ENCODE measurements at regions of chr12 and their contacts with region 1.

Region 1: DNA sequence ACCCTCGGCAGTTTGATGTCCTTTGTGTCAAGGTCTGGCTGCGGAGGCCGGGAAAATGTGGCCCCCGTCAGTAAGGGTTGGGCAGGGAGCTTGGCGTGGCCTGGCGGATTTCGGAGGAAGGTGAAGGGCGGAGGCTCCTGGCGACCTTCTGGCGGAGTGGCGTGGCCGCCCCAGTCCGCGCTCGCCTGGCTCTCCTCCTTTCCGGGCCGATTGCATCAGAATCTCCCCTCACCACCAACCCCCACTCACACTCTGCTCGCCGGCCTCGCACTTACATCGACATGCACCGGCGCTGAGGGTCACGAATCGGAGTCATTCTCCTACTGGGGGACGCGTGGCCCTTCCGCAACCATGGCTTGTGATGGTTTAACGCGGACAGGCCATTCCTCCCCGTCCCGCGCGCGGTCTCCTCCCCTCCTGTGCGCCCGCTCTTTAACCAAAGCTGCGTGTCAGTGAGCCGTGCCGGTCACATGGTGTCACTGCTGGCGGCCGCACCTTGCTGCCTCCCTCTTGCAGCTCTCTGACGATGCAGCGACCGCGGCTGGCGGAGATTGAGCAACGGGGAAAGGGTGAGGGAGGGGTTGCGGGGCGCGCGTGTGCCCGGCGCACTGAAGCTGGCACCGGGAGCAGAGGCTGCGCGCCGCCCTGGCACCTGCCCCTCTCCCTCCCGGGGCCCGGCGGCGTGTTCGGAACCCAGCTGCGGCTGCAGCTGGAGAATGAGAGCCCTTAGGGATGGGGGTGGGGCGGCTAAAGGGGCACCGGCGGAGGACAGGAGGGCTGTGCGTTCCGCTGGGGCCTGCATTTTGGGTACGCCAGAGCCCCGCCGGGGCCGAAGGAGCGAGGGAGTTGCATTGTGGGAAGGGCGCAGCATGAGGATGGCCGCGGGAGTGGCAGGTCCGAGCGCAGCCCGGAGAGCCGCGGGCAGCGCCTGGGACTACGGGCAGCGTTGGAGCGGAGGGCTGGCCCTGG is at the start of gene SLC38A1:
- DNase-seq: peak; percentile 96
- H3K4me3 Mint-ChIP-seq: no peak within 1 kb of the TSS
- H3K27ac Mint-ChIP-seq: no peak within 1 kb of the TSS
- H3K4me1 Mint-ChIP-seq: peaks cover 6% of the 10 kb centered on the region
- H3K27me3 Mint-ChIP-seq: no peaks in the 10 kb centered on the region
- CTCF ChIP-seq: no peak
- total RNA-seq, gene SLC38A1: 327 and 339 TPM in 2 replicates

Region 2: DNA sequence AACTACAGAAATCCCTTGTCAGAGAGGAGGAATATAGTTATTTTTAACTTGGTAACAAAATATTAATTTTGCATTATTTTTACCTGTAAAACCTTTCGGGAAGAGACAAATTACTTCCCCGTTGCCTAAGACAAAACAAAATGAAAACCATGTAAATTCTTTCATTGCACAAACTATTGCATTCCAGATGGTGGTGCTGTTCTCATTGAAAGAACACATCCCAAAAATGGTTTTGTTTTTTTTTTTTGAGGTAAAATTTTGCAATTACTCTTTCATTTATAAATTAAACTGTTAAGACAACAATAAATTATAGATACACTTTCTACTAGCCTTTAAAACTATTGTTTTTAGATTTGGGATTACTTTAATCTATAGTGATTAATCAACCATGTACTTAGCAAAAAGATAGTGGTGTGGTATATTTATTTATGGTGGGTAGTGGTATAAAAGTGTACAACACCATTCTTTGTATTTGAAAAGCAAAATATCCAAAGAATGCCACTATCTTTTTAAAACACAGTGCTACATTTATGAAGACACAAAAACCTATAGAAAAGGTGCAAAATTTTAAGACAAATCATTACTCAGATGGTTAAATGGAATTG is 115.5 kb before region 1 on chr12:
- CTCF ChIA-PET with region 1: interaction called, 7 read pairs
- POLR2A ChIA-PET with region 1: interaction called, 73 read pairs
- intact Hi-C with region 1: loop called (anchors 2 kb)
- DNase-seq: peak; percentile 46
- H3K4me3 Mint-ChIP-seq: no peak overlapping the region
- H3K27ac Mint-ChIP-seq: no peak overlapping the region
- H3K4me1 Mint-ChIP-seq: peaks cover 5% of the 10 kb centered on the region
- H3K27me3 Mint-ChIP-seq: no peaks in the 10 kb centered on the region
- CTCF ChIP-seq: peak; percentile 77

Region 3: DNA sequence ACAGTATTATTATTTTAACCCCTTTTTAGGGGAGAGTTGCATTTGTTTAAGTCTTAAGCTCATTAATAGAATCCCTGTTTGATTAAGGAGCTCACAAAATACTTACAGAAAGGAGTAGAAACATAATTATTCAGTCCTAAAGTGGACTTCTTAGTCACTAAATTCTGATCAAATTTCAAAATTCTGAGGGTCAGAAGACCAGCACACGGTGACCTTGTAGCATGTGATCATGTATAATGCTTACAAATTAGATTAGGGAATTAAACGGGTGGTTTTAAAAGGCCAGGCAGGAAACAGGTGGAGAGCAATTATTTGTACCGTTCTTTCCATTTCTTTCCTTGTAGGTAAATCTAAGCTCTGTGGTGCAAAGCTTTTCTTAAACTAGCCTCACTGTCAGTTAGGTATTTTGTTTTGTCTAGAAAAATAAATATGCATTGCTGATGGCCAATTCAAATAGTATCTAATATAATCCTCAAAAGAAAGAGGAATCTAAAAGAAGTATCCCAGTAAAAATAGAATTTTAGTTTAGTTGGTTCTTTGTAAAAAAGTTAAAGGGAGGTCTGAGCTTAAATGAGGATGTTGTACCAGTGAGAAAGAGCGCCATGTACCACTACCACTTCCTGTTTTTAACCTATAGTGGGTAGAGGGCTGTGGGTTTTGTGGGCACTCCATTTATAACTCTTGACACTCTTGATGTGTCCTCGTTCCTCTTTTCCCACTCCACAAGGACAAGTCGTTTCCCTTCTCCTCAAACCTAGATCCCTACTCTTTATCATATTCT is 51.1 kb before region 1 on chr12:
- CTCF ChIA-PET with region 1: no interaction called
- POLR2A ChIA-PET with region 1: interaction called, 10 read pairs
- intact Hi-C with region 1: loop called (anchors 2 kb)
- DNase-seq: no peak
- H3K4me3 Mint-ChIP-seq: no peak overlapping the region
- H3K27ac Mint-ChIP-seq: no peak overlapping the region
- H3K4me1 Mint-ChIP-seq: peaks cover 40% of the 10 kb centered on the region
- H3K27me3 Mint-ChIP-seq: no peaks in the 10 kb centered on the region
- CTCF ChIP-seq: no peak

Region 4: DNA sequence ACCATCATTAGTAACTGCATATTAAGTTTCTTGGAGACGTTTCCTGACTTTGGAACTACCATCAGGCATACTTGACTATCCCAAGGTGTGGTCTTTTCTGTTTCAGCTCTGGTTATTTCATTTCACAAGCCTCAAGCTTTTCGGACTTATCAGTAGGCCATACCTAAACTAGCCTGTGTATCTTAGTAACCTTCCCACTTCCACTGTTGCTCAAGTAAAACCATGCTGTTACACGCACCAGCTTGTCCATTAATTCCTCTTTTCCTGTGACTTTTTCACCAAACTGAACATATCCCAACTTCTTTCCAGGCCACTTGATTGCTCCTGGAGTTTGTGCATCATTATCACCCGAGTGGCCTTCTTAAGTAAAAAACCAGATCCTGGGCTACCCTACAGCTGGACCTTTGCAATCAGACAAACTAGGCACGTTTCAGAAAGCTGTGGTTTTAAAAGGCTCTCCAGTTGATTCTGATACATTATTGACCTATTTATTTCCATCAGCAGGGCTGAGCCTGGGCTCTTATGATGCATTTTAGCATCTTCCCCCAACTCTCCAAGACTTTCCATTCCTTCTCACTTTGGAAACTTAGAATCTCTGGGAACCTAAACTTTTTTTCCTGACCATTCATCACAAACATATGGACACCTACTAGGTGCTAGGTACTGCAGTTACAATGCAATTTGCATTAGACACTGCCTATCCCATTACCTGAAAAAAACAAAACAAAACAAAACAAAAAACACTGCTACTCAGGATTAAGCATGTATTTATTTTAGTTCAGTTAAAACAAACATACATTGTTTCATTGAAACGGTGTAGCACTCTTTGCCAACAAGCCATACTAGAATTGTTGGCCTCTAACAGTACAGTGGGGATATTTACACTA is 88.8 kb after region 1 on chr12:
- CTCF ChIA-PET with region 1: no interaction called
- POLR2A ChIA-PET with region 1: interaction called, 133 read pairs
- intact Hi-C with region 1: no loop called
- DNase-seq: peak; percentile 72
- H3K4me3 Mint-ChIP-seq: no peak overlapping the region
- H3K27ac Mint-ChIP-seq: peak overlapping the region; percentile 7
- H3K4me1 Mint-ChIP-seq: peaks cover 18% of the 10 kb centered on the region
- H3K27me3 Mint-ChIP-seq: no peaks in the 10 kb centered on the region
- CTCF ChIP-seq: no peak

Region 5: DNA sequence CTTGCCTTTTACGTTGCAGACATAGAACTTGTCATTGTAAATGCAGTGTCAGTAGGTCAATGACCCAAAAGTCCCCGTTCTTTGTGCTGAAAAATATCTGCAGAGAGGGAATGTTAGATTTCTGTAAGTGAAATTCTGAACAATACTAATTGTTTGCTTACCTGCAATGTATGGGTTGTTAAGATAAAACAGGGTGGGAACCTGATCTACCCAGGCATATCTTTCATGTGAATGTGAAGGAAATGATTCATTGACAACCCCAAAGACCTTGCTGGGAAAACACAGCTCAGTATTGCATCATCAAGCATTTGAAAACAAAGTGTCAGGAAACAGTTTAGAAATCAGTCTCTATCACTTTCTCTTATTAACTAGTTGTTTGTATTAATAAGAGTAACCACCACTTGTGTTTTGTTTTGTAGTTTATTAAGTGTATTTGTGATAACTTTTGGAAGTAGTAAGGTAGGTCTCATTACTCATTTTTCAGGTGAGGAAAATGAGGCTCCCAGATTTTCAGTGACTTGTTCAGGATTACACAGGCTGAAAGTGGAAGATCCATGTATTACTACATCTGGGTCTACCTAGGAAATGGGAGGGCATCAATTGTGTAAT is 161.6 kb after region 1 on chr12:
- CTCF ChIA-PET with region 1: no interaction called
- POLR2A ChIA-PET with region 1: interaction called, 12 read pairs
- intact Hi-C with region 1: no loop called
- DNase-seq: peak; percentile 93
- H3K4me3 Mint-ChIP-seq: peak overlapping the region; percentile 61
- H3K27ac Mint-ChIP-seq: peak overlapping the region; percentile 95
- H3K4me1 Mint-ChIP-seq: peaks cover 33% of the 10 kb centered on the region
- H3K27me3 Mint-ChIP-seq: no peaks in the 10 kb centered on the region
- CTCF ChIP-seq: no peak

Region 6: GRCh38 chr12:46702581-46703344 is 433.9 kb after region 1 on chr12:
- CTCF ChIA-PET with region 1: no interaction called
- POLR2A ChIA-PET with region 1: interaction called, 10 read pairs
- intact Hi-C with region 1: no loop called
- DNase-seq: peak; percentile 94
- H3K4me3 Mint-ChIP-seq: peak overlapping the region; percentile 64
- H3K27ac Mint-ChIP-seq: peak overlapping the region; percentile 93
- H3K4me1 Mint-ChIP-seq: peaks cover 30% of the 10 kb centered on the region
- H3K27me3 Mint-ChIP-seq: no peaks in the 10 kb centered on the region
- CTCF ChIP-seq: no peak

Measured in MCF 10A (cell line).